ENCODE measurements at regions of chr3 and their contacts with region 1.

Region 1: GRCh38 chr3:98809557-98809956 is 46.4 kb downstream of the ST3GAL6 start:
- DNase-seq: no peak
- H3K4me3 ChIP-seq: no peak overlapping the region
- H3K27ac ChIP-seq: no peak overlapping the region
- H3K4me1 ChIP-seq: peaks cover 0 to 8% (median 0%) of the 10 kb centered on the region in 4 donors
- H3K27me3 ChIP-seq: no peaks in the 10 kb centered on the region
- CTCF ChIP-seq: no peak

Region 2: DNA sequence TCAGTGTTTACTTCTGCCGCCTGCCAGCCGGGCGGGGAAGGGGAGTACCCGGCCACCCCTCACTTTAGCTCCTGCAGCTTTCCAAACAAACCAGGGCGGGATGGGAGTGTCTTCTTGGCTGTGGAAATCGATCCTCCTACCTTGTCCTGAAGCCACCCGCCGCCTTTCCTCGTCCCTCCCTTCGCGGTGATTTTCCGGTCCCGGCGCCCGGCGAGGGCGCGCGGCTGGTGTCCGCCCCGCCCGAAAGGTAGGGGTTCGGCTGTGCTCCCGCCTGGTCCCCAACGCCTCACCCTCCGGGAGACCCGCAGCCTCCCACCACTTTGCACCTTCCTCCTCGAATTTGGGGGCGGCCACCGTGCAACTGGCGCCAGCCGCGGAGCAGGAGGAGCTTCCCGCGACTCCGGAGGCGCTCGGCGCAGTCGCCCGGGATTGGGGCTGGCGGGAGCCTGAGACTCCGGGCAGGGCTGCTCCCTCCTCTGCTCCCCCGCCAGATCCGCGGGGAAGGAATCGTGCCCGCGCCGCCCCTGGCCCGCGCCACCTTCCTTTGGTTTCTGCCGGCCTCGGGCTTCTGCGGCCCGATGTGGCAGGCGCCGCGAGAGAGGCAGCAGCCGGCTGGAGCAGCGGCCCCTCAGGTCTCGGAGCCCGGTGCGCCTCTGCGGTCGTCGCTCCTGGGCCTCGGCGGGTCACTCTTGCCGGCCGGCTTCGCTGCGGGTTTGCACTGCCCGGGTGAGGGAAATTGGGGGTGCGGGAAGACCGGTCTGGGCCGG is 77.1 kb before region 1 on chr3:
- intact Hi-C with region 1: loop called (anchors 2 kb)
- DNase-seq: peak; percentile 53 to 72
- H3K4me3 ChIP-seq: peak overlapping the region; percentile 77 to 96
- H3K27ac ChIP-seq: peak overlapping the region; percentile 81 to 85
- H3K4me1 ChIP-seq: peaks cover 0 to 22% (median 6%) of the 10 kb centered on the region in 4 donors
- H3K27me3 ChIP-seq: no peaks in the 10 kb centered on the region
- CTCF ChIP-seq: no peak

Region 3: DNA sequence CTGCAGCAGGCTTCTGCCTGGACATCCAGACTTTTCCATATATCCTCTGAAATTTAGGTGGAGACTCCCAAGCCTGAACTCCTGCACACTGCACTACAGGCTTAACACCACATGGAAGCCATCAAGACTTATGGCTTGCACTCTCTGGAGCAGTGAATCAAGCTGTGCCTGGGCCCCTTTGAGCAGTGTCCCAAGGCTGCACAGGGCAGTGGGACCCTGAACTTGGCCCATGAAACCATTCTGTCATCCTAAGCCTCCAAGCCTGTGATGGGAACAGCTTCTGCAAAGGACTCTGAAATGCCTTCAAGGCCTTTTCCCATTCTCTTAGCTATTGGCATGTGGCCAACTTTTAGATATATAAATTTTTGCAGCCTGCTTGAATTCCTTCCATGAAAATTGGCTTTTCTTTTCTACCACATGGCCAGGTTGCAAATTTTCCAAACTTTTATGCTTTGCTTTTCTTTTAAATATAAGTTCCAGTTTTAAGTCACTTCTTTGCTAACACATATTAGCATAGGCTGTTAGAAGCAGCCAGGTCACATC is 349.7 kb after region 1 on chr3:
- intact Hi-C with region 1: no loop called
- DNase-seq: no peak
- H3K4me3 ChIP-seq: no peak overlapping the region
- H3K27ac ChIP-seq: no peak overlapping the region
- H3K4me1 ChIP-seq: no peaks in the 10 kb centered on the region
- H3K27me3 ChIP-seq: no peaks in the 10 kb centered on the region
- CTCF ChIP-seq: no peak